ENCODE measurements at regions of chr10 and their contacts with region 1.

Region 1: GRCh38 chr10:113052076-113052830 is 102.2 kb downstream of the TCF7L2 start:
- DNase-seq: no peak
- H3K4me3 ChIP-seq: no peak overlapping the region
- H3K27ac ChIP-seq: peak overlapping the region; percentile 64 to 86
- H3K4me1 ChIP-seq: peaks cover 0 to 100% (median 84%) of the 10 kb centered on the region in 4 donors
- H3K27me3 ChIP-seq: no peaks in the 10 kb centered on the region
- CTCF ChIP-seq: peak; percentile 16 to 20

Region 2: GRCh38 chr10:112949875-112950507 is 102.3 kb before region 1 on chr10 and contains the start of gene TCF7L2:
- intact Hi-C with region 1: loop called (anchors 10 kb)
- DNase-seq: peak; percentile 98 to 99
- H3K4me3 ChIP-seq: peak within 1 kb of the TSS; percentile 75 to 85
- H3K27ac ChIP-seq: peak within 1 kb of the TSS; percentile 95 to 96
- H3K4me1 ChIP-seq: peaks cover 0 to 56% (median 27%) of the 10 kb centered on the region in 4 donors
- H3K27me3 ChIP-seq: no peaks in the 10 kb centered on the region
- CTCF ChIP-seq: no peak

Region 3: DNA sequence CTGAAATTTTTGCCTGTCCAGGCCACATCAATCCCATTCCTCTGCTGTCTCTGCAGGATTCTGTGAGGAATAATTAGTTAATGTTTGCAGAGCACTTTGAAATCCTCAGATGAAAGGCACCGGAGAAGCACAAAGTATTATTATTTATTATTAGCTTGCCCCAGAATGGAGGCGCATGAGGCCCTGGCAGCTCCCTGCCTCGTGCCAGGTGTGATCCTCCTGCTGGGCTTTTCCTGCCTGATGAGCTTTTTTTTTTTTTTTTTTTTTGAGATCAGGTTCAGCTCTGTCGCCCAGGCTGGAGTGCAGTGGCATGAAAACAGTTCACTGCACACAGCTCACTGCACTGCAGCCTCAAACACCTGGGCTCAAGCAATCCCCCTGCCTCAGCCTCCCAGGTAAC is 37.1 kb before region 1 on chr10:
- intact Hi-C with region 1: no loop called
- DNase-seq: no peak
- H3K4me3 ChIP-seq: no peak overlapping the region
- H3K27ac ChIP-seq: no peak overlapping the region
- H3K4me1 ChIP-seq: peaks cover 0 to 81% (median 42%) of the 10 kb centered on the region in 4 donors
- H3K27me3 ChIP-seq: no peaks in the 10 kb centered on the region
- CTCF ChIP-seq: no peak

Region 4: GRCh38 chr10:113126229-113127201 is 74.3 kb after region 1 on chr10:
- intact Hi-C with region 1: no loop called
- DNase-seq: peak; percentile 70 to 83
- H3K4me3 ChIP-seq: peak overlapping the region; percentile 29 to 44
- H3K27ac ChIP-seq: peak overlapping the region in 1 of 2 donors; percentile 24
- H3K4me1 ChIP-seq: peaks cover 0 to 62% (median 16%) of the 10 kb centered on the region in 4 donors
- H3K27me3 ChIP-seq: no peaks in the 10 kb centered on the region
- CTCF ChIP-seq: peak; percentile 70 to 79

Region 5: GRCh38 chr10:114009281-114009996 is 957.2 kb after region 1 on chr10:
- intact Hi-C with region 1: no loop called
- DNase-seq: no peak
- H3K4me3 ChIP-seq: no peak overlapping the region
- H3K27ac ChIP-seq: no peak overlapping the region
- H3K4me1 ChIP-seq: no peaks in the 10 kb centered on the region
- H3K27me3 ChIP-seq: peaks cover 0 to 4% of the 10 kb centered on the region in 2 donors
- CTCF ChIP-seq: no peak

Measured in tibial artery (tissue), 4 donors.